Activated T-helper 2 cell treated with anti-CD3 and anti-CD28 coated beads, Interferon-gamma antibody, Interleukin-2, Interleukin-4, amounts not matched to agents 10 μg/mL and 5 μg/mL and 100 μg/mL, durations not matched to agents 14 hours and 24 hours and 36 hours (primary cell): ENCODE measurements at regions of chr1 and their contacts with region 1.

Region 1: GRCh38 chr1:233512538-233512937 is 101.4 kb upstream of the KCNK1 start:
- DNase-seq: no peak
- H3K4me3 Mint-ChIP-seq: no peak overlapping the region
- H3K27ac Mint-ChIP-seq: no peak overlapping the region
- H3K4me1 Mint-ChIP-seq: peaks cover 2% of the 10 kb centered on the region
- H3K27me3 Mint-ChIP-seq: no peaks in the 10 kb centered on the region

Region 2: GRCh38 chr1:233406994-233407631 is 105.4 kb before region 1 on chr1:
- intact Hi-C with region 1: loop called (anchors 5 kb)
- DNase-seq: no peak
- H3K4me3 Mint-ChIP-seq: no peak overlapping the region
- H3K27ac Mint-ChIP-seq: peak overlapping the region; percentile 18
- H3K4me1 Mint-ChIP-seq: peaks cover 19% of the 10 kb centered on the region
- H3K27me3 Mint-ChIP-seq: peaks cover 11% of the 10 kb centered on the region

Region 3: DNA sequence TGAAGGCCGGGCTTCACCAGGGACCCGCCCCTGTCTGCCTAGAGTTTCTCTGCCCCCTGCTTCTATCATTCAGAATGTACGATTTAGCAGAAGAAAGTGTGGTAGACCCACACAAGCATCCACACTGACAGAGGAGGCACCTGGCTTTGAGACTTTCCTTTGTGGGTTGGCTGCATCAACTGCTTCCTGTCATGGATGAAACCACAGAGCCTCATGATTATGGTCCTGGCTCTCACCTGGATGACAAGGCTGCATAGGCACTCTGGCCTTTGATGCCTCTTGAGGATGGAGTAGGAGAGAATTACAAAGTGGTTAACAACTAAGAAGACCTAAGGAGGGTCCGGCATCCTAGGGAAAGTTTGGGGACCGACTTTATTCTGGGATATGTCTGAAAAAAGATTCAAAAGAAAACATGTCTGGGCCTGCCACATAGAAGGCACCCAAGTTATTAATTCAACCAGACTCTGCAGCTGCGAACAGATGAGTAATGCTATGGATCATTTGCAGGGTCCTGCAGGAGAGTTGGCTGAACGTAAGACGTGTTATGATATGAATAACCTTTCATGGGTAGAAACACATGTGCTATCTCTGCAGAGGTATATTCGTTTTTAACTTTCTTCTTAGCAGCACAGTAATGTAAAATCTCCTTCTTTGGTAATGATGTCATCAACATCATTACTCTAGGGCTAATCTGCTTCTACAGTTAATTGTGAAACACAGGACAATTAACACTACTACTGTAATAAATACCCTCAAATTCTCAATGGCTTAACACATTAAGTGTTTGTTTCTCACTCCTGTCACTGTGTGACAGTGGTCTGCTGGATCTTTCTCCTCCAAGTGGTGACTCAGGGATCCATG is 528.1 kb after region 1 on chr1:
- intact Hi-C with region 1: no loop called
- DNase-seq: no peak
- H3K4me3 Mint-ChIP-seq: no peak overlapping the region
- H3K27ac Mint-ChIP-seq: no peak overlapping the region
- H3K4me1 Mint-ChIP-seq: no peaks in the 10 kb centered on the region
- H3K27me3 Mint-ChIP-seq: no peaks in the 10 kb centered on the region